ENCODE measurements at regions of chr17 and their contacts with region 1.

Region 1: DNA sequence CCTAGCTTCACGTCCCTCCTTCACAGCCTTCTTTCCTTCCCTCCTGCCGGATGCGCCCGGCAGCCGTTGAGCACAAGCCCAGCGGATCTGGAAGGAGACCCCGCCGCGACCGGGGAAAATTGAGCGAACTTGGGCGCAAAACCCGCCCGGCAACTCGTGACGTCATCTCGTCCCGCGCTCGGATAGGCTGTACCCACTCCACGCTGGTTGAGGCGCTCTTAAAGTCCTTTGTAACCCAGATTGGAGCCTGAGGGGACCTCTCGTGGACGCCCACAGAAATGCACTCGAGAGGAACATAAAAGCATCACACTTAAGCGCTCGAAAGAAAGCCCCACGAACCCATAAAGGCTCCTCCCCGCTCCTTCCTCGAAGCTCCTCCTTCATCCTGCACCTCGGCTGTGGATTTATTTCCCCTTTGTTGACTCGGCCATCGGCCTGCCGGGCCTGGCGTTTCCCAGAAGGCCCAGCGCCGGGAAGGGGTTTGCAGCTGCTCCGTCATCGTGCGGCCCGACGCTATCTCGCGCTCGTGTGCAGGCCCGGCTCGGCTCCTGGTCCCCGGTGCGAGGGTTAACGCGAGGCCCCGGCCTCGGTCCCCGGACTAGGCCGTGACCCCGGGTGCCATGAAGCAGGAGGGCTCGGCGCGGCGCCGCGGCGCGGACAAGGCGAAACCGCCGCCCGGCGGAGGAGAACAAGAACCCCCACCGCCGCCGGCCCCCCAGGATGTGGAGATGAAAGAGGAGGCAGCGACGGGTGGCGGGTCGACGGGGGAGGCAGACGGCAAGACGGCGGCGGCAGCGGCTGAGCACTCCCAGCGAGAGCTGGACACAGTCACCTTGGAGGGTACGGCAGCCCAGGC is at the start of gene PSMD3:
- DNase-seq: peak; percentile 100
- H3K4me3 ChIP-seq: peak within 1 kb of the TSS; percentile 96
- H3K27ac ChIP-seq: peak within 1 kb of the TSS; percentile 64
- H3K4me1 ChIP-seq: peaks cover 23% of the 10 kb centered on the region
- CTCF ChIP-seq: peak; percentile 79
- total RNA-seq, gene PSMD3: 149 and 150 TPM in 2 replicates

Region 2: DNA sequence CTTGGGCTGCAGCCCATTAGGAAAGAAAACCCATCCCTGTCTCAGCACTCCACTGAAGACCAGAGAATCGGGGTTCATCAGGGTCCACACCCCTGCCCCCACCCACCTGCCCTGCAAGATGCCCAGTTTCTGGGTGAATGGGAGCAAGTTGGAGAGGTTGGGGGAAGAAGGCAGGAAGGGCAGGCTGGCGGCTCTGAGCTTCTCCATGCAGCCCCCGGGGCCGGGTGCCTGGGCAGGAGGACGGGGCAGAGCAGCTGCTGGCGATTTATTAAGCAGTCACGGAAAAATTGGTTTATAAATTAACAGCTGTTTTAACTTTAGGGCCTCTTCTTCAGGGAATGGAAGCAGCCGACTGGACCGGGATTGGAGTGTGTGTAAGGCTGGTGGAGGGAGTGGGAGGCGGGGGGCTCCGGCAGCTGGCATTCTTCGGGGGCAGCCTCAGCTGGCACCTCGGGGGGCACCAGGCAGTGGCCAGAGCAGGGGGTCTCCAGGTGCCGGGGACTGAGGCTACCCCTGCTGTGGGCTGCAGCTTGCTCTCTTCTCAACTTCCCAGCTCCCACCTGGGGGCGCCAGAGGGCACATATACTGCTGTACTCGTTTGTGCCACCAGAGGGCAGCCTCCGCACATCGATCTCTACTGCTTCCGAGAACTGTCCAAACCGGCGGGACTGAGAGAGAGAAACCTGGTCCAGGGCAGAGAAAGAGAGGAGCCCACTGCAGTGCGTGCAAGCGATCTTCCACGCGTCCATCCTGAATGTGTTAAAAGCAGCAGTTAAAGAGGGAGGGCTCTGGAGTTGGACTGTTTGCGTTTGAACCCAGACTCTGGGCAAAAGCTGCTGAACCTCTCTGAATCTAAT is 358.8 kb before region 1 on chr17:
- CTCF ChIA-PET with region 1: no interaction called
- POLR2A ChIA-PET with region 1: no interaction called
- intact Hi-C with region 1: loop called (anchors 1 kb)
- DNase-seq: peak; percentile 87
- H3K4me3 ChIP-seq: peak overlapping the region; percentile 36
- H3K27ac ChIP-seq: peak overlapping the region; percentile 53
- H3K4me1 ChIP-seq: peaks cover 37% of the 10 kb centered on the region
- CTCF ChIP-seq: peak; percentile 100

Region 3: DNA sequence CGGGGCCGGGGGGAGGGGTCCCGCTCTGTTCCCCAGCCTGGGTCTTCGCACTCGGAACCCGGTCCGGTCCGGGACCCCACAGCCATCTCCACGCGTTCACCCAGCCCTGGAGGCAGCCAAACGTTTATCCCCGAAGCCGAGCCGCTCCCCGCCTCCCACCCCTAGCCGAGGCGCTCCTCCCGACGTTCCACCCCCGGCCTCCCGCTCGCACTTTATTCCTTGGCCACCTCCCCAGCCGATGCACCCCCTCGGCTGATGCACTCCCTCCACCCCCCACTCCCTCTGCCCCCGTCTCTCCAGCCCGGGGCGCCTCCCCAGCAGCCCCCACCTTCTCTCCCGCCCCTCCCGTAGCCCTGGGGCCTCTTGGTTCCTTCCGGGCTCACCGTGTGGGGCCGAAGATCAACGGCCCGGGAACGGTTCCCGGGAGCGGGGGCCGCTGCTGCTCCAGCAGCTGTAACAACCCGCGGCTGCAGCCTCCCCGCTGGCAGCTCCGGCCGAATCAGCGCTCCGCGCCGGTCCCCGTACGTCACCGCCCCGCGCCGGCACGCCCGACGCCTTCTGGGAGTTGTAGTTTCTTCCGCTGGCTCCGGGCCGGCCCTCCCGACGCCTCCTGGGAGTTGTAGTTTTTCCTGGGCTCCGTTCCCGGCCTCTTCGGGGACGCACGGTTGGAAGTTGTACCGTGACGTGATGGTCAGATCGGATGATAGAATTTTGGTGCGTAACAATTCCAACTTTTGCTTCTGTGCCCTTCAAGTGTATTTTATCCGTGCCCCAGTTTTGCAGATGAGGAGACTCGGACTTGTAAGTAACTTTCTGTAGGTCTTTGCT is 53.3 kb before region 1 on chr17 and contains the starts of genes LRRC3C and ORMDL3:
- CTCF ChIA-PET with region 1: no interaction called
- POLR2A ChIA-PET with region 1: no interaction called
- intact Hi-C with region 1: loop called (anchors 1 kb)
- DNase-seq: peak; percentile 93
- H3K4me3 ChIP-seq: peak within 1 kb of the TSS; percentile 91
- H3K27ac ChIP-seq: peak within 1 kb of the TSS; percentile 65
- H3K4me1 ChIP-seq: peaks cover 40% of the 10 kb centered on the region
- CTCF ChIP-seq: no peak
- total RNA-seq, gene LRRC3C: not detected in 2 replicates
- total RNA-seq, gene ORMDL3: 62.2 and 62.6 TPM in 2 replicates

Region 4: GRCh38 chr17:39939588-39940419 is 40.8 kb before region 1 on chr17:
- CTCF ChIA-PET with region 1: no interaction called
- POLR2A ChIA-PET with region 1: no interaction called
- intact Hi-C with region 1: loop called (anchors 1 kb)
- DNase-seq: peak; percentile 86
- H3K4me3 ChIP-seq: peak overlapping the region; percentile 8
- H3K27ac ChIP-seq: peak overlapping the region; percentile 33
- H3K4me1 ChIP-seq: peaks cover 24% of the 10 kb centered on the region
- CTCF ChIP-seq: peak; percentile 85

Region 5: GRCh38 chr17:39963829-39964228 is 16.8 kb before region 1 on chr17:
- CTCF ChIA-PET with region 1: no interaction called
- POLR2A ChIA-PET with region 1: interaction called, 6 read pairs
- intact Hi-C with region 1: loop called (anchors 1 kb)
- DNase-seq: no peak
- H3K4me3 ChIP-seq: no peak overlapping the region
- H3K27ac ChIP-seq: no peak overlapping the region
- H3K4me1 ChIP-seq: peaks cover 29% of the 10 kb centered on the region
- CTCF ChIP-seq: no peak